Prostate gland (tissue), 2 donors: ENCODE measurements at regions of chr1 and their contacts with region 1.

Region 1: GRCh38 chr1:107750358-107750959 is 214.5 kb downstream of the VAV3 start:
- DNase-seq: peak; percentile 68
- H3K4me3 ChIP-seq: no peak overlapping the region
- H3K27ac ChIP-seq: no peak overlapping the region
- H3K4me1 ChIP-seq: no peaks in the 10 kb centered on the region
- H3K27me3 ChIP-seq: no peaks in the 10 kb centered on the region
- CTCF ChIP-seq: peak; percentile 42 to 71 (median 66)
- POLR2A ChIP-seq: no peak

Region 2: GRCh38 chr1:106027871-106028270 is 1722.6 kb before region 1 on chr1:
- intact Hi-C with region 1: loop called (anchors 5 kb)
- DNase-seq: no peak
- H3K4me3 ChIP-seq: no peak overlapping the region
- H3K27ac ChIP-seq: no peak overlapping the region
- H3K4me1 ChIP-seq: no peaks in the 10 kb centered on the region
- H3K27me3 ChIP-seq: no peaks in the 10 kb centered on the region
- CTCF ChIP-seq: no peak
- POLR2A ChIP-seq: no peak

Region 3: GRCh38 chr1:106798991-106799390 is 951.5 kb before region 1 on chr1:
- intact Hi-C with region 1: no loop called
- DNase-seq: no peak
- H3K4me3 ChIP-seq: no peak overlapping the region
- H3K27ac ChIP-seq: no peak overlapping the region
- H3K4me1 ChIP-seq: no peaks in the 10 kb centered on the region
- H3K27me3 ChIP-seq: no peaks in the 10 kb centered on the region
- CTCF ChIP-seq: no peak
- POLR2A ChIP-seq: no peak

Region 4: DNA sequence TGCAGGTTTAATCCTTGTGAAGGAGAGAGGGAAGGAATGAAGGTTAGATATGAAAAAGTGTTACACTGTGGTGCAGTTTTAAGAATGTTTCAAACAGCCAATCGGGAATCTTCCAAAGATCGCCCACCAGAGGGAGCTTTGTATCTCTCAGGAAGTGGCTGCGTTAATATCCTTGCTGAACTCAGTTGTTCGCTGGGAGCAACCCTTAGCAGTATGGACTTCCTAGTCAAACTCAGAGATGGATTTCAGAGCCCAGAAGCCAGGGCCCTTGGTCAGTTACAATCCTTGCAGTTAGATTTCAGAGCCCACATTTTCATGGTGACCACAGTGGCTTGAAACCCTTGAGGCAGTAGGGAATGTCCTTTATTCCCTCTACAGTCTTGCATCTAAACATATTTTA is 473.4 kb before region 1 on chr1:
- intact Hi-C with region 1: loop called (anchors 10 kb)
- DNase-seq: peak; percentile 5
- H3K4me3 ChIP-seq: no peak overlapping the region
- H3K27ac ChIP-seq: no peak overlapping the region
- H3K4me1 ChIP-seq: no peaks in the 10 kb centered on the region
- H3K27me3 ChIP-seq: no peaks in the 10 kb centered on the region
- CTCF ChIP-seq: peak in 2 of 4 experiments; percentile 21 to 34
- POLR2A ChIP-seq: no peak

Region 5: DNA sequence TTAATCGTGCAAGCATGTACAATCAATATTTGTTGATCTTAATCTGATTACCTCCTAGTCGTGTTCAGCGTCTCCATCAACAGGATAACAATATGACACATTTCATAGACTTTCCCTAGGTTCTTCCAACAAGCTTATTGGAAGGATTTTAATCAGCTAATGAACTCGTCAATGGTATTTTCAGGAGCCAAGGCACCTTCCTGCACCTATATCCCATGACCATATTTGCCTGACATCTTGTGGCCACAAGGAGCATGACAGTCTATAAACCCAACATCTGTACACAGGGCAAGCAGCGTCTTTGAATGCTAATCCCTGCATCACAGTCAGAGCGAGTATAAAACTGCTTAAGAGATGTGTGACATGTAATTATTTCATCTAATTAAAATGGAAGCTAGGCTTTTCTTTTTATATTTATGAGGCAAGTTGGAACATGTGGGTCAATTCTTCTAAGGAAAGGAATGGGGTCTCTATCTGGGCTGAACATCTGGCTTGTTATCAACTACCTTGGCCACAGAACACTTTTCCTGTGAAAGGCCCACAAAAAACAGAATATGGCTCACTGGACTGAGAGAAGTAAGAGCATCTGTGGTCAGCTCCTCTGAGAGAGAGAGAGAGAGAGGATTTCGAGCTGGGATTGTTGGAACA is 220.8 kb before region 1 on chr1:
- intact Hi-C with region 1: loop called (anchors 10 kb)
- DNase-seq: peak; percentile 68
- H3K4me3 ChIP-seq: no peak overlapping the region
- H3K27ac ChIP-seq: peak overlapping the region; percentile 8 to 29
- H3K4me1 ChIP-seq: no peaks in the 10 kb centered on the region
- H3K27me3 ChIP-seq: no peaks in the 10 kb centered on the region
- CTCF ChIP-seq: peak in 3 of 4 experiments; percentile 75 to 87 (median 82)
- POLR2A ChIP-seq: no peak

Region 6: DNA sequence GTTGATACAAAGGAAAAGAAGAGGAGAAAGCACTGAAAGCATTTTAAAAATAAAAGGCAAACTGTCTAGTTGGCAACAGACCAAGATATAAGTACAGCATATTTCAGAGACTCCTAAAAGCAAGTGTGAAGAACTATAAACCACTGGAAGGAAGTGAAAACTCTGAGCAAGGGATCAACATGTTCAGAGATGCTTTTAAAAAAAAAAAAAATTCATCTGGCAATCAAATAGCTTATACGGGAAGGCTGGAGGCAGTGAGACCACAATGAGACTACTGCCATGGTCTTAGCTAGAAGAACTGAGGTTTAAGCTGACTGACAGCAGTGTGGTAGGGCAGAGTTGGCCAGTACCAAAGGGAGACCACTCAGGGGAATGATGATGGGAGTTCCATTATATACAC is 90.3 kb after region 1 on chr1:
- intact Hi-C with region 1: no loop called
- DNase-seq: no peak
- H3K4me3 ChIP-seq: no peak overlapping the region
- H3K27ac ChIP-seq: no peak overlapping the region
- H3K4me1 ChIP-seq: no peaks in the 10 kb centered on the region
- H3K27me3 ChIP-seq: no peaks in the 10 kb centered on the region
- CTCF ChIP-seq: no peak
- POLR2A ChIP-seq: no peak